ENCODE measurements at regions of chr15 and their contacts with region 1.

Region 1: GRCh38 chr15:67109141-67110034 is 44.0 kb downstream of the SMAD3 start:
- DNase-seq: peak; percentile 99
- ATAC-seq: peak; percentile 42
- H3K4me3 ChIP-seq: no peak overlapping the region
- H3K27ac ChIP-seq: peak overlapping the region; percentile 95
- H3K4me1 ChIP-seq: peaks cover 54% of the 10 kb centered on the region
- H3K27me3 ChIP-seq: no peaks in the 10 kb centered on the region
- CTCF ChIP-seq: no peak
- POLR2A ChIP-seq: no peak; the same call in 1 of the 2 replicates
- RAD21 ChIP-seq: peak; percentile 23; the same call in 1 of the 2 replicates

Region 2: DNA sequence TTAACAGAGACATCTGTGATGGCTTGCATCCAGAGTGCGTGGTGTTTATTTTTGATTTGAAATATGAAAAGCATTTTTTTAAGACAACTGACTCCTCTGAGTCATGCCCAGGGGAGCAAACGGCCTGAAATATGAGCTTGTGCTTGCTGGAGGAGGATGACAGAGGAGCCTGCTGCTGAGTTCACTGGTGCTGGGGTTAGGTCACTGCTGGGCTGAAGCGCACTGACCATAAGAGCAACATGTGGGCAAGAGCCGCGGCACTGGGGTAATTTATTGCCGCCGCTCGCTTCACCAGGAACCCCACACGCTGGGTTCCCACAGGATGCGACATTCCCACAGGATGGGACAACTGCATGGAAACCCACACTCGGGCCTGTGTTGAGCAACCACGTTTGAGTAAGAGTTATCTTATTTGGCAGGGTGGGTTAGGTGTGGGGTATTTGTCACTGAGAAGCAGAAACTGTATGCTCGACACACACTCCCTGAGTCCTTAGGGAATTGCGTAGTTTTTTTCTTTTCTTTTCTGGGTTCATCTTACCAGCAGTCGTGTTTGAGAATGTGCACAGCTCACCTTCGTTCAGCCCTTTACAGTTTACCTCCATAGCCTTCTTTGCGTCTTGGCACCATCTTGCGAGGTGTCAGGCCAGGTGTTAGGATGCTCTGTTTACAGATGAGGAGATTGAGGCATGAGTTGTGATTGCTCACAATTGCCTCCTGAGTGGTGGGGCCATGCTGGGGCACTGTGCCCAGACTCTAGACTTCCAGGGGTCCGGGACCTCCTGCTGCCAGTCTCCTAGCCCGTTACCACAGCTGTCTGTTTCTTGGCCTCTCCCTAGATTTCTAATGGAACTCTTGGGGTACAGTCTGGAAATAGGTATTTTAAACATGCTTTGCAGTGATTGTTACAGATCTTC is 16.5 kb after region 1 on chr15:
- CTCF ChIA-PET with region 1: no interaction called
- POLR2A ChIA-PET with region 1: interaction called, 3 read pairs
- dilution Hi-C with region 1: no loop called
- in situ Hi-C with region 1: no loop called
- intact Hi-C with region 1: loop called (anchors 2 kb)
- DNase-seq: peak; percentile 100
- ATAC-seq: peak; percentile 77
- H3K4me3 ChIP-seq: peak overlapping the region; percentile 7; the same call in 1 of the 2 replicates
- H3K27ac ChIP-seq: peak overlapping the region; percentile 99
- H3K4me1 ChIP-seq: peaks cover 52% of the 10 kb centered on the region
- H3K27me3 ChIP-seq: no peaks in the 10 kb centered on the region
- CTCF ChIP-seq: no peak
- POLR2A ChIP-seq: peak; percentile 61
- RAD21 ChIP-seq: peak; percentile 32

Region 3: GRCh38 chr15:67170143-67170925 is 60.9 kb after region 1 on chr15:
- CTCF ChIA-PET with region 1: no interaction called
- POLR2A ChIA-PET with region 1: no interaction called
- dilution Hi-C with region 1: no loop called
- in situ Hi-C with region 1: loop called (anchors 5 kb)
- intact Hi-C with region 1: loop called (anchors 2 kb)
- DNase-seq: no peak
- ATAC-seq: no peak
- H3K4me3 ChIP-seq: no peak overlapping the region
- H3K27ac ChIP-seq: peak overlapping the region; percentile 48
- H3K4me1 ChIP-seq: peaks cover 72% of the 10 kb centered on the region
- H3K27me3 ChIP-seq: no peaks in the 10 kb centered on the region
- CTCF ChIP-seq: no peak
- POLR2A ChIP-seq: no peak
- RAD21 ChIP-seq: no peak

Region 4: GRCh38 chr15:67175643-67176071 is 66.3 kb after region 1 on chr15:
- CTCF ChIA-PET with region 1: no interaction called
- POLR2A ChIA-PET with region 1: interaction called, 4 read pairs
- dilution Hi-C with region 1: no loop called
- in situ Hi-C with region 1: loop called (anchors 5 kb)
- intact Hi-C with region 1: loop called (anchors 2 kb)
- DNase-seq: peak; percentile 69
- ATAC-seq: no peak
- H3K4me3 ChIP-seq: no peak overlapping the region
- H3K27ac ChIP-seq: peak overlapping the region; percentile 78
- H3K4me1 ChIP-seq: peaks cover 74% of the 10 kb centered on the region
- H3K27me3 ChIP-seq: no peaks in the 10 kb centered on the region
- CTCF ChIP-seq: no peak
- POLR2A ChIP-seq: no peak
- RAD21 ChIP-seq: no peak